MCF 10A (cell line): ENCODE measurements at regions of chr7 and their contacts with region 1.

Region 1: DNA sequence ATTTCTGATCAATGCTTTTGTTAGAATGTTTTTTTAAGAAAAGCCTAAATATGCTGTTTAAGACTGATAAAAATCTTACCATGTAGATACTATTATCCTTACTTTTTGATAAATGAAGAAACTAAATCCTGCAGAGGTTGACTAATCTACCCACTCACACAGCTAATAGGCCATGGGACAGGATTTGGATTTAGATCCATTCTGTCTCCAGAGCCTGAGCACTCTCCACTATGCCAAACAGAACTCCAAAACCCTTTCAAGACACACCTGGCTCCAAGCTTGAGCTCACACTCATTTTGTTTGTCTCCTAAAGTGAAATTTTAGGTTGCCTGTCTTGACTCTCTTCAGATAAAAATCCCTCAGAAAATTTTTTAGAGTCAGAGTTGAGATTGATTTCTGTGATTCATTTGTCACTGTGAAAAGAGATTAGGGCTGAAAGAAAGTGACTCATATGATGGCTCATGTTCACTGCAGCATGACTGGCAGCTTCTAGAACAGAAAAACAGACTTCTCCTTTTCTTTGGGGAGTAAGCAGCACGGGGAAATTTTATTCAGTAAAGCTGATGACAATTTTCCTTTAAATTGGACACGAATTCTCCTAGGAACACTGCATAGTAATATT is 132.3 kb upstream of the POT1 start:
- DNase-seq: peak; percentile 68
- H3K4me3 Mint-ChIP-seq: no peak overlapping the region
- H3K27ac Mint-ChIP-seq: peak overlapping the region; percentile 74
- H3K4me1 Mint-ChIP-seq: peaks cover 12% of the 10 kb centered on the region
- H3K27me3 Mint-ChIP-seq: no peaks in the 10 kb centered on the region
- CTCF ChIP-seq: no peak

Region 2: DNA sequence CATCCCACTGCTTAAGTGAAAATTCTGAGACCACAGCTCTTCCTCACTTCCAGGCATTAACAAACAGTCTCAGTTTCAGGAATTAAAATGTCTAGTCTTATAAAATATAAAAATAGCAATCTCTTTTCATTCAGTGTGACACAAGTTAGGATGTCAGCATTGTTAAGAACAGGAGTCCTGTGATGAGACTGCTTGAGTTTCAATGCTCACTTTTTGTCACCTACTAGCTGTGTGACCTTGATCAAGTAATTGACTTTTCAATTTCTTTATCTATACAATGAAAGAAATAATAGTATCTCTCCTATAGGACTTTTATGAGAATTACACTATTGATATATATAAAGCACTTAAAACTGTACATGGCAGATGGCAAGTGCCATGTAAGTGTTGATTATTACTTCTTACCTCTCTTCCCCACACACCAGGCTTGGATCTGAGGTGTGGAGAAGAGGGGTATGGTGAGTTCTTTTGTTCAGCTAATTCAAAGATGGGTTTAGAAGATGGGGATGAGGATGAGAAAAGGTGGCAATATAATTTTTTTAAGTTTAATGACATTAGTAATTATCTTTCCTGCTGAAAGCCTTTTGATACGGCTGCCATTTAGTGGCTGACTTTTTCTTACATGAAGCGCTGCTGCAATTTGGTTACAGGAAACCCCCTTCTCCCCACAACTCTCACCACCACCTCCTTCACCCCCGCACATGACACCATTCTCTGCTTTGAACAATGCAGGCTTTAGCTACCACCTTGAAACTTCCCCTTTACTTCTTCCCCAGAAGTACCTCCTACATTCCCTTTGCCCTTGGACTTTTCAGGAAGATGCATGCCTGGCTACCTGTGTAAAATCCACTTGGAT is 1237.8 kb before region 1 on chr7:
- CTCF ChIA-PET with region 1: no interaction called
- POLR2A ChIA-PET with region 1: no interaction called
- intact Hi-C with region 1: no loop called
- DNase-seq: no peak
- H3K4me3 Mint-ChIP-seq: no peak overlapping the region
- H3K27ac Mint-ChIP-seq: no peak overlapping the region
- H3K4me1 Mint-ChIP-seq: peaks cover 8% of the 10 kb centered on the region
- H3K27me3 Mint-ChIP-seq: no peaks in the 10 kb centered on the region
- CTCF ChIP-seq: no peak

Region 3: DNA sequence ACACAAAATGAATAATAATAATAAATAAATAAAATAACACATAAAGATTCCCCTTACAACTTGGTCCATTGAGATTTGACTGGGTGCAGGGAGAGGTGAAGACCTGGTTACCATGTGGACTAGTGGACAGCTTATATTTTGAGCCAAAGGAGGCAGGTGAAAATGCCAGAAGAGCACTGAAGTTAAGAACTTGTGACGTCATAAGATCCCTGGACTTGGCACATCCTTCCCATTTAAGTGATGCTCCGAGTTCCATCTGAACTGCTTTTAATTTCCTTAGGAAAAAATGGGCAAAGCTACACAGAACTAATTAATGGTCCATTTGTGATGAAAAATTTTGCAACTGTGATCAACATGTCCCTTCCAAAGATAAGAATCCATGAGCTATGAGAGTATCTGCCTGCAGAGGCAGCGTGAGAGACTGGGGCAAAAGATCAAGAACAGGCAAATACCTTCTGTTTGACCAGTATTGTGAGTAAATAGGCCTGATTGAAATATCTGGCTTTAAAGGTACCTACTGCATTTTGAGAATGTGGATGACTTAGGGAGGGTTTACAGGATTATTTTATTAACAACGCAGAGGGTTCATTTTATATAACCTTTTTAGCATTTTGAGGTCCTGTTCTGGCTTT is 31.0 kb before region 1 on chr7:
- CTCF ChIA-PET with region 1: no interaction called
- POLR2A ChIA-PET with region 1: no interaction called
- intact Hi-C with region 1: no loop called
- DNase-seq: no peak
- H3K4me3 Mint-ChIP-seq: no peak overlapping the region
- H3K27ac Mint-ChIP-seq: no peak overlapping the region
- H3K4me1 Mint-ChIP-seq: no peaks in the 10 kb centered on the region
- H3K27me3 Mint-ChIP-seq: no peaks in the 10 kb centered on the region
- CTCF ChIP-seq: no peak

Region 4: DNA sequence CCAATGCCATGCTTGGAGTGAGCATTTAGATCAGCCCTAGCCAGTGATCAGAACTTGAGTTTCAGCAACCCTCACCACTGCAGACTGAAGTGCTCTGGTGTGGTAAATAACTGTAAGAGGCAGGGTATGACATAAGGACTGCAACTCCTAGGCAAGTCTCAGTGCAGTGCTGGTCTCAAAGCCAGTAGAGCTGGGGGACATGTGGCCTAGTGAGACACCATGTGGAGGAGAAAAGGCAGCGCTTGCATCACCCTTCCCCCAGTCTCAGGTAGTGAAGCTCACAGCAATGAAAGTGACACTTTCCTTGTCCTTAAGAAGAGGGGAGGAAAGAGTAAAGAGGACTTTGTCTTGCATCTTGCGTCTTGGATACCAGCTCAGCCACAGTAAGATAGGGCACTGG is 254.6 kb after region 1 on chr7:
- CTCF ChIA-PET with region 1: interaction called, 80 read pairs
- POLR2A ChIA-PET with region 1: interaction called, 3 read pairs
- intact Hi-C with region 1: loop called (anchors 1 kb)
- DNase-seq: peak; percentile 61
- H3K4me3 Mint-ChIP-seq: no peak overlapping the region
- H3K27ac Mint-ChIP-seq: no peak overlapping the region
- H3K4me1 Mint-ChIP-seq: no peaks in the 10 kb centered on the region
- H3K27me3 Mint-ChIP-seq: no peaks in the 10 kb centered on the region
- CTCF ChIP-seq: peak; percentile 29

Region 5: GRCh38 chr7:125670926-125671572 is 609.2 kb after region 1 on chr7:
- CTCF ChIA-PET with region 1: interaction called, 24 read pairs
- POLR2A ChIA-PET with region 1: interaction called, 3 read pairs
- intact Hi-C with region 1: loop called (anchors 1 kb)
- DNase-seq: peak; percentile 57
- H3K4me3 Mint-ChIP-seq: no peak overlapping the region
- H3K27ac Mint-ChIP-seq: no peak overlapping the region
- H3K4me1 Mint-ChIP-seq: no peaks in the 10 kb centered on the region
- H3K27me3 Mint-ChIP-seq: no peaks in the 10 kb centered on the region
- CTCF ChIP-seq: peak; percentile 74